ENCODE measurements at regions of chr11 and their contacts with region 1.

Region 1: DNA sequence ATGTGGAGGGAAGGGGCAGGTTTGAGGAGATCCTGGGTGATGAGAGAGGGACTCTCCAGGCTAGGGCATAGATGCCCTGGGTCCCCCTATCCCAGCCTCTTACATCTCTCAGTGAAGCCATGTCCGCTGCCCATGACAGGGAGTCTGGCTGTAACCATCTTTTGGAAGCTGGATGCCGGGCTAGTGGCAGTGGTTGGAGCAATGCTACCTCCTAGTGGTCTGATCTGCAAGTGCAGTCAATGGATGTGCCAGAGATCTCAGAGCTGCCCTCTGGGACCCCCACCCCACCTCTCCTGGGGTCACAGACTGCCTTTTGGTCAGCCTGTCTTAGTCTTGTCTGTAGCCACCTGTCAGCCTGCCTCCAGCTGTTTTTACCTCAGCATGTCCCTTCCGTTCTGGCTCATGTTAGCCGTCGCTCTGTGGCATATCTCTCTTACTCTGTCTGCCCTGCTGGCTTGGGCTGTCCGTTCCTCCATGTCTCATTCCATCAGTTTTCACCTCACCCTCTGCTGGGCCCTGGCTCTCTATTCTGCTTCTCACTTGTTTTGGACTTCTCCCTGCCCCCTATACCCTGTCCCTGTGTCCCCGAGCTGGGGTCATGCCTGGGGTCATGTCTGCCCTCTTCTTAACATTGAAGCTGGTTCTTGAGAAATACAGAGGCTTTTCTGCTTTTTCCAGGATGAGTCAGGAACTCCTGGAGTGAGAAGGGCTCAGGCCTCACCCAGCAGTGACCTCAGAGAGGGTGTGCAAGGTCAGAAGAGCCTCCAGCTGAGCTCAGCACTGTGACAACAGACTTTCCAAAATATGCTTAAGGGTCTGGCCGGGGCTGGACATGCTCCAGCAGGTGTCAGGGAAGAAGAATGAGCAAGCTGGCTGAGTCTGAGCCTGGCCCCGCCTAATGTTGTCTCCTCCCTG is 52.0 kb upstream of the THY1 start:
- DNase-seq: peak; percentile 72
- H3K4me3 Mint-ChIP-seq: no peak overlapping the region
- H3K27ac Mint-ChIP-seq: no peak overlapping the region
- H3K4me1 Mint-ChIP-seq: no peaks in the 10 kb centered on the region
- H3K27me3 Mint-ChIP-seq: peaks cover 14% of the 10 kb centered on the region

Region 2: DNA sequence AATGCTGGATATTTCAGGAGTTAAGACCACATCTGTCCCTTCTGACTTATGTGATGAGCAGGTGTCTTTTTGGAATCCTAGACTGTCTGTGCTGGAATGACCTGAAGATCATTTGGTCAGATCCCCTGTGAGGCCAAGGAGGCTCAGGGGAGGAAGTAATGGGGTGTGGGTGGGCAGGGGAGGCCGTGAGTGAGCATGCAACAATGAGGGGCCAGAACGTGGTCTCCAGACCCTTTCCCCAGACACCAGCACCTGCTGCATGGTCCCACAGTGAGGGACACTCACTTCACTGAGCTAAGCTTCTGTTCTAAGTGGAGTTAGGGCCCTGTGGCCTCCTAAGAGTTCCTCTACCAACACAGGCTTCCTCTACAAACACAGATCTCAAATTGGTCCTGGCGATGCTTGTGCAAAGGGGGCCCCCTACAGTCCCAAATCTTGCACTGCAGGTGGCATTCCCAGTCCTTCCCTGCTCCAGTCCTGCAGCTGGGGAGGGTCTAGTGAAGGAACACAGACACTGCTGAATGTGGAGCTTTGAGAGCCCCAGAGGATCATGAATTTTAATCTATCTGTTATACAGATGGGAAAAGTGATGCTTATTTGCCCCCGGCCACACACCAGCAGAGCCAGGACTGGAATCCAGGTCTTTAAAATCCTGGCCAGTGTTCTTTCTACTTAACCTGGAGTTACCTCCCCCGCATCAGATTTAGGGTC is 100.9 kb before region 1 on chr11:
- CTCF ChIA-PET with region 1: interaction called, 22 read pairs
- POLR2A ChIA-PET with region 1: no interaction called
- intact Hi-C with region 1: no loop called
- DNase-seq: peak; percentile 73
- H3K4me3 Mint-ChIP-seq: no peak overlapping the region
- H3K27ac Mint-ChIP-seq: no peak overlapping the region
- H3K4me1 Mint-ChIP-seq: peaks cover 8% of the 10 kb centered on the region
- H3K27me3 Mint-ChIP-seq: peaks cover 1% of the 10 kb centered on the region

Region 3: DNA sequence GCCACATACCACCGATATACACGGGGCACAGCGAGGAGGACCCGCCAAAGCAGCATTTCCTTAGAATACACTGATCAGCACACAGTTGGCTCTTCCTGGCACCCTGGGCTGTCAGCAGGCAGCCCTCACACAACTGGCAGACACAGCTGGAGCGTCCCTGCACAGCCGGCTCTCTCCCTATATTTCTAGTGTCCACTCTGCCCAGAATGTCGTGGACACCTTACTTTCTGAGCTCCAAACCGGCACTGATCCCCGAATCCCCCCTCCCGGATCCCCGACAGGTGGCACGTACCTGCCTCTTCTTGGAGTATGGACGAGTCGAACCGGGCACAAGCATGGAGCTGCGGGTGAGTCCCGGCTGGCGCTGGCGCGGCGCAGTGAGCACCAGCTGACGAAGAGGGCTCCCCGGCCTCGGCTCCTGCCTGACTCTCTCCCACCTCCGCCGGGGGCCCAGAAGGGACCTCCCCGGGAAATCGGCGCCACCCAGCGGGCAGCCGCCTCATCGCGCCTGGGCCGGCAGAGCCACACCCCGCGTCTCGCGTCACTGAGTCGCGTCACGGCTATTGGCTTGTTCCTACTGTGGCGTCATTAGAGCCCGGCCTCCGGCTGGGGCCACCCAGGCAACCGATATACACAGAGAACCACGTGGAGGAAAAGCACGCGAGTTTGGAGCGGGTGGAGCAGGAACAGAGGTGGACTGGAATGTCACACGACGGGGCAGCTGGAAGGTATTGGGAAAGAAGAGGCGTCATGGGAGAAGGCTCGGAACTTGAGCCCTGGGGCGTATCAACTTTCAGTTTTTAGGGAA is 93.6 kb before region 1 on chr11 and contains the start of gene USP2:
- CTCF ChIA-PET with region 1: interaction called, 51 read pairs
- POLR2A ChIA-PET with region 1: no interaction called
- intact Hi-C with region 1: loop called (anchors 10 kb)
- DNase-seq: peak; percentile 98
- H3K4me3 Mint-ChIP-seq: no peak within 1 kb of the TSS
- H3K27ac Mint-ChIP-seq: peak within 1 kb of the TSS; percentile 2
- H3K4me1 Mint-ChIP-seq: peaks cover 10% of the 10 kb centered on the region
- H3K27me3 Mint-ChIP-seq: no peaks in the 10 kb centered on the region
- total RNA-seq, gene USP2: 1.4 to 2.2 TPM

Region 4: GRCh38 chr11:119491753-119492510 is 17.0 kb after region 1 on chr11:
- CTCF ChIA-PET with region 1: interaction called, 12 read pairs
- POLR2A ChIA-PET with region 1: no interaction called
- intact Hi-C with region 1: no loop called
- DNase-seq: no peak
- H3K4me3 Mint-ChIP-seq: no peak overlapping the region
- H3K27ac Mint-ChIP-seq: no peak overlapping the region
- H3K4me1 Mint-ChIP-seq: no peaks in the 10 kb centered on the region
- H3K27me3 Mint-ChIP-seq: peaks cover 8% of the 10 kb centered on the region

Region 5: DNA sequence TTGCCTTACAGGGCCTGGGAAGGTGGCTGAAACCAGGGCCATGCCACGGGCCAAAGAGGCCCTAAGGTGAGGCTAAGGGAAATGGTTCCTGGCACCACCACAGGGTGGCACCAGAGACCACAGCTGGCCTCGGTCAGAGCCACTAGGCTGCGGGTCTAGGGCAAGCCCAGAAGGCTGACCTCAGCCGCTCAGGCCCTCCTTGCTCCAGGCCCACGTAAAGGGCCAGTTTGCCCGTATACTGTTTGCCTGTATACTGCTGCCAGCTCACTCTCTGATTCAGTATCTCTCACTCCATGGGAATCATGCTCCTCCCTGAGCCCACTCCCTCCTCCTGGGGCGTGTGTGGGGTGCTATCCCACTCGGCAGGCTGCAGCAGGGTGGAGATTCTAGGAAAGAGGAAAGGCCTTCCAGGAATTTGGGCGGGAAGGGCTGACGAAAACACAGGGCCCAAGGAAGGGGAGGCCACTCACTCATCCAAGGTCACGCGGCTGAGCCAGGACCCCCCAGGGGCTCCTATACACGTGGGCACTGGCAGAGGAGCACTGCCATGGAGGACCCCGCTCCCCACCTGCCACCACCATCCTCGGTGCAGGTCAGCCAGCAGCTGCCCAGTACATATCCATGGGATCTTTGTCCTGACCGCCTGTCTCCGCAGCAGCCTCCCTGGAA is 191.7 kb after region 1 on chr11:
- CTCF ChIA-PET with region 1: no interaction called
- POLR2A ChIA-PET with region 1: no interaction called
- intact Hi-C with region 1: no loop called
- DNase-seq: peak; percentile 74
- H3K4me3 Mint-ChIP-seq: no peak overlapping the region
- H3K27ac Mint-ChIP-seq: no peak overlapping the region
- H3K4me1 Mint-ChIP-seq: no peaks in the 10 kb centered on the region
- H3K27me3 Mint-ChIP-seq: no peaks in the 10 kb centered on the region

Region 6: GRCh38 chr11:119832202-119832935 is 357.4 kb after region 1 on chr11:
- CTCF ChIA-PET with region 1: no interaction called
- POLR2A ChIA-PET with region 1: no interaction called
- intact Hi-C with region 1: no loop called
- DNase-seq: no peak
- H3K4me3 Mint-ChIP-seq: no peak overlapping the region
- H3K27ac Mint-ChIP-seq: no peak overlapping the region
- H3K4me1 Mint-ChIP-seq: peaks cover 8% of the 10 kb centered on the region
- H3K27me3 Mint-ChIP-seq: peaks cover 42% of the 10 kb centered on the region